CD8-positive, alpha-beta T cell (primary cell): ENCODE measurements at regions of chr19 and their contacts with region 1.

Region 1: GRCh38 chr19:44093931-44094765 is at the start of gene ZNF224:
- DNase-seq: peak; percentile 55 to 91 (median 83)
- ATAC-seq: peak; percentile 78
- H3K4me3 ChIP-seq: peak within 1 kb of the TSS; percentile 76 to 89
- H3K4me3 Mint-ChIP-seq: peak within 1 kb of the TSS; percentile 96
- H3K27ac ChIP-seq: peak within 1 kb of the TSS; percentile 63 to 74
- H3K27ac Mint-ChIP-seq: peak within 1 kb of the TSS; percentile 91
- H3K4me1 ChIP-seq: no peaks in the 10 kb centered on the region
- H3K4me1 Mint-ChIP-seq: peaks cover 28% of the 10 kb centered on the region
- H3K27me3 ChIP-seq: no peaks in the 10 kb centered on the region
- H3K27me3 Mint-ChIP-seq: no peaks in the 10 kb centered on the region
- CTCF ChIP-seq: no peak
- total RNA-seq, gene ZNF224: 18.2 to 22.5 TPM

Region 2: GRCh38 chr19:43826787-43827754 is 267.1 kb before region 1 on chr19 and contains the start of gene ZNF283:
- CTCF ChIA-PET with region 1: no interaction called
- POLR2A ChIA-PET with region 1: no interaction called
- intact Hi-C with region 1: loop called (anchors 1 to 5 kb)
- DNase-seq: peak; percentile 64 to 90 (median 81)
- ATAC-seq: peak; percentile 92
- H3K4me3 ChIP-seq: peak within 1 kb of the TSS; percentile 52 to 69
- H3K4me3 Mint-ChIP-seq: peak within 1 kb of the TSS; percentile 88
- H3K27ac ChIP-seq: no peak within 1 kb of the TSS
- H3K27ac Mint-ChIP-seq: peak within 1 kb of the TSS; percentile 39
- H3K4me1 ChIP-seq: peaks cover 12% of the 10 kb centered on the region
- H3K4me1 Mint-ChIP-seq: peaks cover 22% of the 10 kb centered on the region
- H3K27me3 ChIP-seq: no peaks in the 10 kb centered on the region
- H3K27me3 Mint-ChIP-seq: peaks cover 8% of the 10 kb centered on the region
- CTCF ChIP-seq: no peak
- total RNA-seq, gene ZNF283: 1.3 to 1.4 TPM

Region 3: GRCh38 chr19:44002566-44003460 is 91.3 kb before region 1 on chr19 and contains the start of gene ZNF230:
- CTCF ChIA-PET with region 1: interaction called, 5 read pairs
- POLR2A ChIA-PET with region 1: interaction called, 4 read pairs
- intact Hi-C with region 1: loop called (anchors 1 kb)
- DNase-seq: peak; percentile 64 to 96 (median 82)
- ATAC-seq: peak; percentile 96
- H3K4me3 ChIP-seq: peak within 1 kb of the TSS; percentile 91 to 92
- H3K4me3 Mint-ChIP-seq: peak within 1 kb of the TSS; percentile 99
- H3K27ac ChIP-seq: peak within 1 kb of the TSS; percentile 59 to 81
- H3K27ac Mint-ChIP-seq: peak within 1 kb of the TSS; percentile 98
- H3K4me1 ChIP-seq: peaks cover 12% of the 10 kb centered on the region
- H3K4me1 Mint-ChIP-seq: peaks cover 23% of the 10 kb centered on the region
- H3K27me3 ChIP-seq: no peaks in the 10 kb centered on the region
- H3K27me3 Mint-ChIP-seq: no peaks in the 10 kb centered on the region
- CTCF ChIP-seq: no peak
- total RNA-seq, gene ZNF230: 2.4 to 3.8 TPM

Region 4: DNA sequence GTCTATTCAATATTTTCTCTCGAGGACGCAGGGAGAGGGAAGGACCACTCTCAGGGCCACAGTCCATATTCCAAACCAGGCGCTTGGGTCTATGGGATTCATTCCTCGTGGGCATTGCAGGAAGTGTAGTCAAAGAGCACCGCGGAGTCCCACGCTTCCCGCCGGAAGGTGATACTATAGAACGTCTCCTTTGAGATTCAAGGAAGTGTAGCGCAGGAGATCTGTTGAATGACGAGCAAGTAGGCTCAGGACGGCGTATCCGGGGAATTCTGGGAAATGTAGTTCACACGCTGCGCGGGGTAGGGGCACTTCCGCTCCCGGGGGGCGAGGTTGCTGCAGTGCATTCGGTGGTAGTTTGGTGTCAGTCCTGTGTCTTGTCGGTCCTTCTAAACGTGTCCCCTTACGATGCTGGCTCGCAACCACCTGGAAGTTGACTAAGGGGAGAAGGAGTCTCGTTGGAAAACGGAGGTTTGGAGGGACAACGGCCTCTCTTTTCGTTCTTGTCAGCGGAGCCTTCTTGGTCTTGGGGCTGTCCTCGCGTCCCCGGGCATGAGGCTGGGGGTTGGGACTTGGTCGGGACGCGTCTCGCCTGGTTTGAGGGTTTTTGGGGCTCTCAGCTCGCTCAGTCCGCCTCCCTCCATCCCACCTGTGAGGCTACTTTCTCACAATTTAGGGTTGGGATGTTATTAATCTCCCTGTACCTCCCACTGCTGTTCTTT is 22.2 kb before region 1 on chr19 and contains the start of gene ZNF284:
- CTCF ChIA-PET with region 1: no interaction called
- POLR2A ChIA-PET with region 1: interaction called, 3 read pairs
- intact Hi-C with region 1: loop called (anchors 1 kb)
- DNase-seq: peak; percentile 60 to 93 (median 83)
- ATAC-seq: peak; percentile 99
- H3K4me3 ChIP-seq: peak within 1 kb of the TSS; percentile 65 to 73
- H3K4me3 Mint-ChIP-seq: peak within 1 kb of the TSS; percentile 91
- H3K27ac ChIP-seq: peak within 1 kb of the TSS; percentile 2 to 59
- H3K27ac Mint-ChIP-seq: peak within 1 kb of the TSS; percentile 79
- H3K4me1 ChIP-seq: peaks cover 16% of the 10 kb centered on the region
- H3K4me1 Mint-ChIP-seq: peaks cover 36% of the 10 kb centered on the region
- H3K27me3 ChIP-seq: no peaks in the 10 kb centered on the region
- H3K27me3 Mint-ChIP-seq: no peaks in the 10 kb centered on the region
- CTCF ChIP-seq: no peak
- total RNA-seq, gene ZNF284: 0.64 to 1.2 TPM

Region 5: DNA sequence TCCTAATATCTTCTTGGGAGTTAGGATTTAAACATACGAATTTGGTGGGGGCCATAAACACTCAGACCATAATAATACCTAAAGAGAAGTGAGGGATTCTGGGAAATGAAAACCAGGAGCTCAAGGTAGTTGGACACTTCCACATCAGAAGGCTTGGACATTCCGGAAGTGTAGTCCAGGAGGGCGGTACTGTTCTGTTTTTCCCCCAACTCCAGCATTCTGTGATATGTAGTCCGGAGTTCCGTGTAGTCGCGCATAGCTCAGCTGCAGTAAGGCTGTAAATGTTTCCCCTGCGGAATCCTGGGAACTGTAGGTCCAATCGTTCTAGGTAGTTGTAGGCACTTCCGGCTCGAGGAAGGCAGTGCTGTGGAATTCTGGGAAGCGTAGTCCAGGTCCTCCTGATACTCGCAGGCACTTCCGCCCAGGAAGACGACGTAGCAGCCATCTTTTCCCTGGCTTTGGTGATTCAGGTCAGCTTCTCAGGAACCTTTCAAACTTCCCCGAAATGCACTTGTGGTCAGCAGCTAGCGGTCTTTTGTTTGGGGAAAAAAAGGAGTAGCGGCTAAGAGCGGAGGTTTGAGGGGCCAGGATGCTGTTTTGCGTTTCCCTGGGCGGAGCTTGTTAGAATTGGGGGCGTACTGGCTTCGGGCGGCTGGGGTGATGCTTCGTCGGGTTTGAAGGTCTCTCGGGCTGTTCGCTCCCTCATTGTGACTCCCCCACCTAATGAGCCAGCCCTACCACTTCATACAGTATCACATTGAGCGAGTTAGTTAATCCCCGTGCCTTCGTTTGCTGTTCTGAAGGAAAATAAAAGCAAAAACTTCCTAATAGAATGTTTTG is 70.7 kb after region 1 on chr19 and contains the start of gene ZNF226:
- CTCF ChIA-PET with region 1: no interaction called
- POLR2A ChIA-PET with region 1: interaction called, 5 read pairs
- intact Hi-C with region 1: loop called (anchors 1 to 2 kb)
- DNase-seq: peak; percentile 61 to 95 (median 82)
- ATAC-seq: peak; percentile 92
- H3K4me3 ChIP-seq: peak within 1 kb of the TSS; percentile 72 to 79
- H3K4me3 Mint-ChIP-seq: peak within 1 kb of the TSS; percentile 98
- H3K27ac ChIP-seq: peak within 1 kb of the TSS; percentile 69 to 90
- H3K27ac Mint-ChIP-seq: peak within 1 kb of the TSS; percentile 99
- H3K4me1 ChIP-seq: peaks cover 10% of the 10 kb centered on the region
- H3K4me1 Mint-ChIP-seq: peaks cover 31% of the 10 kb centered on the region
- H3K27me3 ChIP-seq: no peaks in the 10 kb centered on the region
- H3K27me3 Mint-ChIP-seq: no peaks in the 10 kb centered on the region
- CTCF ChIP-seq: no peak
- total RNA-seq, gene ZNF226: 9.1 to 10.8 TPM

Region 6: DNA sequence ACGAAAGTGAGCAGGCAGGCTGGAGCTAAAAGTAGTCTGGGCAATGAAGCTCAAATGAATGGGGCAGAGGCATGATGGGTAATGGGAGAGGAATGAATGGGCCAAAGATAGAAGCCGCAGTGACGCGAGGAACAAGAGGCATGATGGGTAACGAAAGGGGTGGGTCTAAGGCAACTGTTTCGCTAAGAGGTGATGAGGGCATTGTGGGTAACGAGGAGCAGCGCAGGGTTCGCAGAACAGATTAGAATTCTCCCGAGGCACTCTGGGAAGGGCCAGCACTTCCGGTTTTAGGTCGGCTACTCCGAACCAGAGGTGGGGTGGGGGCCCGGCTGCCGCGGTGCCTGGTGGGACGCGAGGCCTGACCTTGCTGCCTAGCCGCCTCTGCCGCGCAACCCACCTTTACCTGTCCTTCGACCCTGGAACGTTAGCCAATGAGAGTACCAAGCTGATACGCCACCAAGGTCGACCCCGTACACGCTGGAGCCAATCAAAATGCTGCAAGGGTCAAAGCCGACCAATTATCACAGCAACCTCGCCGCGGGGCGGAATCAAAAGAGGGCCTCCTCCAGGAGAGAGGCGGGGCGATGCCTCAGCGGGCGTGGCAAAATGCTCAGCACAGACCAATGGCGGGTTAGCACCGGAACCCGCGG is 796.3 kb after region 1 on chr19:
- CTCF ChIA-PET with region 1: no interaction called
- POLR2A ChIA-PET with region 1: no interaction called
- intact Hi-C with region 1: loop called in 1 of 2 experiments (anchors 5 kb)
- DNase-seq: peak in 4 of 9 experiments; percentile 100
- ATAC-seq: peak; percentile 78
- H3K4me3 ChIP-seq: peak overlapping the region; percentile 58 to 76
- H3K4me3 Mint-ChIP-seq: peak overlapping the region; percentile 85
- H3K27ac ChIP-seq: peak overlapping the region; percentile 89 to 98
- H3K27ac Mint-ChIP-seq: peak overlapping the region; percentile 94
- H3K4me1 ChIP-seq: peaks cover 20% of the 10 kb centered on the region
- H3K4me1 Mint-ChIP-seq: peaks cover 27% of the 10 kb centered on the region
- H3K27me3 ChIP-seq: no peaks in the 10 kb centered on the region
- H3K27me3 Mint-ChIP-seq: no peaks in the 10 kb centered on the region
- CTCF ChIP-seq: no peak